Heart right ventricle (tissue), 16 donors: ENCODE measurements at regions of chr4 and their contacts with region 1.

Region 1: DNA sequence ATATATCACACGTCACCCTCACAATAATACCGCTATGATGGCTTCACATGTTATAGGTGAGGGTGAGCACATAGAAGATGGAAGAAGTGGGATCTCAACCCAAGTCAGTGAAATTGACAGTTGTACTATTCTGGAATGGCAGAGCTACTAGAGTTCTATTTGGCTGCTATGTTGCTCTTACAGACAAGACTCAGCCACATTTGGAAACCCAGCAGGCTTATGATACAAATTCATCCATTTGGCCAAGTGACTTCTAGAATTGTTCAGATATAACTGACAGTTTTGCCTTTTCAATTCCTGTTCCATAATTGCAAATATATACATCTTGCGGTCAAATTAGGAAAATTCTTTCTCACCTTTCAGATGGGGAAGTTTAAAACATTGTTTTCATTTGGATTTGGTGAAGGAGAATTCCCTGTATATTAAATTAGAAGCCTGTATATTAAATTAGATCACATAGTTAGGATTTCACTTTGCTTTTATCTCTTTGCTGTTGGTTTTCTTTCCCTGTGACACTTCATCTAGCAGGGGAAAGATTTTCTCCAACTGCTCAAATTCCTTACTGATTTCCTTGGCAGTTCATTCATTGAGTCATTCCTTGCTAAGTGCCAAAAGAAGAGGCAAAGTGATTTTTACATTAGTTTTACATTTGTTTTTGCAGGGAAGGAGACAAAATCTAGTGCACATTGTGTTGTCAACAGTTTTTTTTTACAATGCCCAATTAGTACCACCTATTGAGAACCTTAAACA is 120.6 kb upstream of the TBC1D9 start:
- DNase-seq: no peak
- ATAC-seq: no peak
- H3K4me3 ChIP-seq: no peak overlapping the region
- H3K27ac ChIP-seq: peak overlapping the region in 1 of 10 donors; percentile 12
- H3K4me1 ChIP-seq: peaks cover 0 to 29% (median 8%) of the 10 kb centered on the region in 9 donors
- H3K27me3 ChIP-seq: no peaks in the 10 kb centered on the region
- CTCF ChIP-seq: no peak

Region 2: GRCh38 chr4:140996766-140997165 is 120.0 kb after region 1 on chr4:
- intact Hi-C with region 1: loop called in 1 of 10 experiments (anchors 10 kb)
- DNase-seq: no peak
- ATAC-seq: no peak
- H3K4me3 ChIP-seq: no peak overlapping the region
- H3K27ac ChIP-seq: peak overlapping the region in 3 of 10 donors; percentile 13 to 65 (median 31)
- H3K4me1 ChIP-seq: peaks cover 2 to 62% (median 16%) of the 10 kb centered on the region in 9 donors
- H3K27me3 ChIP-seq: no peaks in the 10 kb centered on the region
- CTCF ChIP-seq: peak in 1 of 9 donors; percentile 36